ENCODE measurements at regions of chr2 and their contacts with region 1.

Region 1: GRCh38 chr2:34738691-34739090 is 1139.6 kb upstream of the FAM98A start:
- DNase-seq: no peak
- H3K4me3 ChIP-seq: no peak overlapping the region
- H3K27ac ChIP-seq: no peak overlapping the region
- H3K4me1 ChIP-seq: no peaks in the 10 kb centered on the region
- H3K27me3 ChIP-seq: no peaks in the 10 kb centered on the region
- CTCF ChIP-seq: no peak
- POLR2A ChIP-seq: no peak

Region 2: DNA sequence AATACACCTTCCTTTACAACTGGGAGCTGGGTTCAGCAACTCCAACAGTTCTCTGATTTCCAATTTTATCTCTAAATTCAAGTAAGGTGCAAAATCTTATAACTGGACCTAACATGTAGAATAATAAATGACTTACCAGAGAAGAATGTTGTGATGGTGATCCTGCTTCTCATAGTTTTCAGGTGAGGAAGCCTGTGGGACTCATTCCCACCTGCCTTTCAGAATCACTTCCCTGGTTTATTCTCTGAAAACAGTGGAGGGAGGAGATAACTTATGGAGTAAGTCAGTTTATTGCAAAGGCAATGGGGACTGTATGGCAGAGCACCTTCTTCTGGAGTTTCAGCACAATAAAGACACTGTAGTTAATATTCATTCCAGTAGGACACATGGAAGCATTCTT is 48.6 kb after region 1 on chr2:
- intact Hi-C with region 1: loop called (anchors 1 kb)
- DNase-seq: no peak
- H3K4me3 ChIP-seq: no peak overlapping the region
- H3K27ac ChIP-seq: no peak overlapping the region
- H3K4me1 ChIP-seq: no peaks in the 10 kb centered on the region
- H3K27me3 ChIP-seq: no peaks in the 10 kb centered on the region
- CTCF ChIP-seq: no peak
- POLR2A ChIP-seq: no peak

Region 3: GRCh38 chr2:34831096-34831495 is 92.4 kb after region 1 on chr2:
- intact Hi-C with region 1: no loop called
- DNase-seq: no peak
- H3K4me3 ChIP-seq: no peak overlapping the region
- H3K27ac ChIP-seq: no peak overlapping the region
- H3K4me1 ChIP-seq: no peaks in the 10 kb centered on the region
- H3K27me3 ChIP-seq: no peaks in the 10 kb centered on the region
- CTCF ChIP-seq: no peak
- POLR2A ChIP-seq: no peak

Region 4: GRCh38 chr2:35374845-35375244 is 636.2 kb after region 1 on chr2:
- intact Hi-C with region 1: no loop called
- DNase-seq: no peak
- H3K4me3 ChIP-seq: no peak overlapping the region
- H3K27ac ChIP-seq: no peak overlapping the region
- H3K4me1 ChIP-seq: no peaks in the 10 kb centered on the region
- H3K27me3 ChIP-seq: no peaks in the 10 kb centered on the region
- CTCF ChIP-seq: no peak
- POLR2A ChIP-seq: no peak

Measured in vagina (tissue), 2 donors.